GM12878 (cell line): ENCODE measurements at regions of chr3 and their contacts with region 1.

Region 1: GRCh38 chr3:64411101-64411500 is 185.8 kb upstream of the PRICKLE2 start:
- DNase-seq: no peak
- ATAC-seq: no peak
- H3K4me3 ChIP-seq: no peak overlapping the region
- H3K27ac ChIP-seq: no peak overlapping the region
- H3K4me1 ChIP-seq: no peaks in the 10 kb centered on the region
- H3K27me3 ChIP-seq: no peaks in the 10 kb centered on the region
- CTCF ChIP-seq: no peak
- EP300 ChIP-seq: no peak
- POLR2A ChIP-seq: no peak
- RAD21 ChIP-seq: no peak

Region 2: DNA sequence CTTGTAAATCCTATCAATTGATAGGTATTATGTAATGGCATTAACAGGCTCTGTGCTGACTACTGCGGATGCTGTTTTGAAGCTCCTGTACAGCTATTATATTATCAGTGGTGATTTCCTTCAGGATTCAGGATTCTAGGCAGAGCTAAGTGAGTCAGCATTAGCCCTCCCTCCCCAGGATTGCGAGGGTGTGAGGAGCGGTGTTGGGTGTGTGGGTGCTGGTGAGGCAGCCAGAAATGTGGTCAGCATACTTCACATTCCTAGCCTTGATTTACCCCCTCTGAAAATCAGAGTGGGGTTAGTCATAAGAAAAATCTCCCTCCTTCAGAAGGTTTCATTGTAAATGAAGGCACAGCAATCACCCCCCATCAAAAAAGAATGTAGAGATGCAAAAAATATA is 686.1 kb before region 1 on chr3:
- CTCF ChIA-PET with region 1: no interaction called
- POLR2A ChIA-PET with region 1: no interaction called
- RAD21 ChIA-PET with region 1: no interaction called
- SMC1A ChIA-PET with region 1: no interaction called
- in situ Hi-C with region 1: no loop called
- intact Hi-C with region 1: no loop called
- DNase-seq: no peak
- ATAC-seq: no peak
- H3K4me3 ChIP-seq: no peak overlapping the region
- H3K27ac ChIP-seq: no peak overlapping the region
- H3K4me1 ChIP-seq: no peaks in the 10 kb centered on the region
- H3K27me3 ChIP-seq: no peaks in the 10 kb centered on the region
- CTCF ChIP-seq: no peak
- EP300 ChIP-seq: no peak
- POLR2A ChIP-seq: no peak
- RAD21 ChIP-seq: no peak

Region 3: GRCh38 chr3:64431526-64432091 is 20.5 kb after region 1 on chr3:
- CTCF ChIA-PET with region 1: interaction called, 4 read pairs
- POLR2A ChIA-PET with region 1: interaction called, 5 read pairs
- RAD21 ChIA-PET with region 1: interaction called, 3 read pairs
- SMC1A ChIA-PET with region 1: interaction called, 40 read pairs
- in situ Hi-C with region 1: no loop called
- intact Hi-C with region 1: no loop called
- DNase-seq: no peak
- ATAC-seq: no peak
- H3K4me3 ChIP-seq: no peak overlapping the region
- H3K27ac ChIP-seq: no peak overlapping the region
- H3K4me1 ChIP-seq: no peaks in the 10 kb centered on the region
- H3K27me3 ChIP-seq: no peaks in the 10 kb centered on the region
- CTCF ChIP-seq: no peak
- EP300 ChIP-seq: no peak
- POLR2A ChIP-seq: no peak
- RAD21 ChIP-seq: no peak

Region 4: DNA sequence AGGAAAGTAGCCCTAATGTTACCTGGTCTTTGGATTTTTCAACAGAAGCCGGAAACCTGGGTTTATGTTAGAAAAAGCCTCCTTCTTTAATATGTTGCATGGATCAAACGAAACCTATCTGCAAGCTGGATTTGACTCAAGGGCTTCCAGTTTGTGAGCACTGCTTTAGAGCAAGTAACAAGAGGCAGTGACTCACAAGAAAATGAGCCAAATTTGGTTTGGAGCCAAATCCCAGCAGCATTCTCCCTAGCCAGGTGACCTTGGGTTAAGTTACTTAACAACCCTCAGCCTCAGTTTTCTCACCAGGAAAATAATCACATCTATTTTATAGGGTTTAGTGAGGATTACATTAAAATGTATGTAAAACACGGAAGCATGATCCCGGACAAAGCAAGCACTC is 29.4 kb after region 1 on chr3:
- CTCF ChIA-PET with region 1: interaction called, 3 read pairs
- POLR2A ChIA-PET with region 1: interaction called, 4 read pairs
- RAD21 ChIA-PET with region 1: interaction called, 3 read pairs
- SMC1A ChIA-PET with region 1: interaction called, 40 read pairs
- in situ Hi-C with region 1: no loop called
- intact Hi-C with region 1: no loop called
- DNase-seq: no peak
- ATAC-seq: no peak
- H3K4me3 ChIP-seq: no peak overlapping the region
- H3K27ac ChIP-seq: no peak overlapping the region
- H3K4me1 ChIP-seq: no peaks in the 10 kb centered on the region
- H3K27me3 ChIP-seq: peaks cover 3 to 4% of the 10 kb centered on the region in 2 experiments; a peak in 2 of 4 replicates
- CTCF ChIP-seq: no peak
- EP300 ChIP-seq: no peak
- POLR2A ChIP-seq: no peak
- RAD21 ChIP-seq: no peak

Region 5: DNA sequence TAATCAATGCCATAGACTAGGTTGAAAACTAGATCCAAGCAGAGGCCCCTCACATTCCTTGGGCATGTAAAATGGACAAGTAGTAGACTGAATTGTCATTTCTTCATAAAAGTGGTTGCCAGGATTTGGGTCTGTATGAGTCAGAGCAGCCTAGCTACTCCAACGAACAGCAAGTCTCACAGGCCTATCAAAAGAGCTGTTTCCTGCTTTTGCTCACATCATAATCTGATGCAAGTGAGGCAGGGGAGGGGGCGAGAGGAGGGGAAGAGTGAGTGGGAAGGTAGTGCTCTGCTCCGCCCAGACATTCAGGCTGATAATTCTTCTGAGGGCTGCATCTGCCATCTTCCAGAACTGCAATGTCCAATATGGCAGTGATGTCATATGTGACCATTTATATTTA is 43.1 kb after region 1 on chr3:
- CTCF ChIA-PET with region 1: interaction called, 5 read pairs
- POLR2A ChIA-PET with region 1: interaction called, 11 read pairs
- RAD21 ChIA-PET with region 1: interaction called, 19 read pairs
- SMC1A ChIA-PET with region 1: interaction called, 35 read pairs
- in situ Hi-C with region 1: no loop called
- intact Hi-C with region 1: no loop called
- DNase-seq: no peak
- ATAC-seq: peak; percentile 23; the same call in 2 of the 3 replicates
- H3K4me3 ChIP-seq: no peak overlapping the region
- H3K27ac ChIP-seq: no peak overlapping the region
- H3K4me1 ChIP-seq: peaks cover 4% of the 10 kb centered on the region; the same call in 1 of the 2 replicates
- H3K27me3 ChIP-seq: no peaks in the 10 kb centered on the region
- CTCF ChIP-seq: no peak
- EP300 ChIP-seq: no peak
- POLR2A ChIP-seq: no peak
- RAD21 ChIP-seq: no peak